ENCODE measurements at regions of chr5 and their contacts with region 1.

Region 1: GRCh38 chr5:142655339-142656267 is 30.3 kb downstream of the FGF1 start:
- DNase-seq: peak; percentile 86
- CTCF ChIP-seq: peak; percentile 96

Region 2: DNA sequence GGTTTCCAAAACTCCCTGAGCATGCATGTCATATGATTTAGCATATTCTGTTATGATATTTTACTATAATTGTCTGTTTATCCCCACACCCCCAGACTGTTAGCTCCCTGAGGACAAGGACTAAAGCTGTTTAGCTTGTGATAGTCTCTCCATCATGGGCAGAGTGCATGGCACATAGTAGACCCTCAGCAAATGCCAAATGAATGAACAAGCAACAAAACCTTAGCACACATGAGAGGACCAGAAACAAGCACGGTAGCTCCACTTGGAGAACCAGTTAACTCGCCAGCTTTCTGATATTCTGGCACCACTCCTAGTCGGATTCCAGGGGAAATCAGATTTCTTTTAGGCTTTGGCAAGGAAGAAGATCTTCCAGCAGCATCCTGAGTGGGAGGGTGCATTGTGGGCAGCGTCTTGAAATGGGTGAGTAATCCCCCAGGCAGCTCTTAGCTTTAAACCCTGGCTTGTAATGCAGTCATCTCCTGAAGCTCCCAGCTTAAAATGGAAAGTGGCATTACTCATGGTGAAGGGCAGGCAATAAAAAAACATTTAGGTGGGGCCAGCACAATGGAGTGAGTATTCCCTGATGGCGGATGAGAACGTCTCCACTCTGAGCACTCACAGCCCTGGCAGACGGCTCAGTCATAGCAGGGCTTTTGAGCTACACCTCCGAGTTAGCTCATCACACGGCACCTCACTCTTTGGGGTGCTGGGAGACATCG is 10.8 kb before region 1 on chr5:
- CTCF ChIA-PET with region 1: interaction called, 15 read pairs
- POLR2A ChIA-PET with region 1: no interaction called
- DNase-seq: no peak
- CTCF ChIP-seq: no peak

Region 3: GRCh38 chr5:142669477-142669876 is 13.9 kb after region 1 on chr5:
- CTCF ChIA-PET with region 1: interaction called, 13 read pairs
- POLR2A ChIA-PET with region 1: no interaction called
- DNase-seq: no peak
- CTCF ChIP-seq: no peak

Region 4: DNA sequence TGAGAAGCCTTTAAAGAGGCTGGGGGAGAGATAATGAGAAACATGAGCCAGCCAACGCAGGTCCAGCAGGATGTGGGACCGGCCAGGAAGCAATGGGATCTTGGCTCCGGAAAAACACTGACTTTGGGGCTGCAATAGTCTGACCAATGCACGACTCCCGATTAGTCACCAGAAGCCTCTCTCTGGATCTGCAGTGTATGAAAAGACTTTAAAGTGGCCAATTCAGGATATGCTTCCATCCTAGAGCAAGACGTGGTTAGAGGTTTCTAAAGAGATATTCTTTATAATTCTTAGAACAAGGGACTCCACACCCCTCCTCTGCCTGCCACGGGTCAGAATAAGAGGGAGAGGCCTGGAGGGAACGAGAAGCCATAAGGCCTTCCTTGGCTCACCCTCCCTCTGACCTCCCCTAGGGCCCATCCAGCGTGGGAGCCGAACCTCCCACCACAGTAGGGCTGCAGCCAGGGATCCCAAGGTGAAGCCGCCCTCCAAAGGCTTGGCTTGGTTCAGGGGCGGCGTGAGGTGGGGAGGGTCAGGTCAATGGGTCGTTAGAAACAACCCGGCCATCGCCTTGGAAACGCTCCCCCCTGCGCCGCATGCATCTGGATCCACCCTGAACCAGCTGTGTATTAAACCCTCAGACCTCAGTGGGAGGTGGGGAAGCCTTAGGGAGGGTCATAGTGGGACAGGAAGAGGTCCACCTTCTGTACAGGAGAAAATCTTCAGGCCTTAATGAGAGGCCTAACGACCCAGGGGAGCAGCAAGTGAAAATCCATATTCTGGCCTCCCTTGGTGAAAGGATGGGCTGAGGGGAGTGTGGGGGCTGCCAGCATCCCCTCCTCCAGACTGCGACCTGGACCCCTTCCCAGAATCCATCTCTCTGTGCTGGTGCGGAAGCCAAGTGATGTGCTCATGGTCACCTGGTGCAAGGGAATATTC is 19.2 kb after region 1 on chr5:
- CTCF ChIA-PET with region 1: interaction called, 13 read pairs
- POLR2A ChIA-PET with region 1: no interaction called
- DNase-seq: no peak
- CTCF ChIP-seq: no peak

Region 5: DNA sequence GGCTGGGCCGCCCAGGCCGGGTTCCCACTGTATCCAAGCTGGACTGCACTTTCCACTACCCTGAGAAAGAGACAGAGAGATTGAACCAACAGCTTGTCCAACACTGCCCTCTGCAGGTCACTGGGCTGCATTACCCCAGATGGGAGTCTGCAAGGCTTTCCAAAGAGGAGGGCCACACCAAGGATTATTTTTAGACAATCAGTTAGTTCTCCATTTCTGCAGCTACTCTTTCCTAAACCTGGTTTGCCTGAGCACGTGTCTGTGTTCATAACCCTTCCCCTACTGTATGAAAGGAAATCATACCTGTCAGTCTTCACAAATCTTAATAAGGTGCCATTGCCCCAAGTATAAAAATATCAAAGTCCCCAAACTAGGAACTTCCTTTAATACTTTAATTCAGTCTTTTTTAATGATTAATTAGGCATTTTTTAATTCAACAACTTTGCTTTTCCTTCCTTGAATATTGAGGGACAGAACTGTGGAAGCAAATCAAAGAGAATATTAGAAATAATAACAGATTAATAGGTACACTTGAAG is 43.6 kb after region 1 on chr5:
- CTCF ChIA-PET with region 1: interaction called, 23 read pairs
- POLR2A ChIA-PET with region 1: no interaction called
- DNase-seq: peak; percentile 68
- CTCF ChIP-seq: peak; percentile 94

Region 6: DNA sequence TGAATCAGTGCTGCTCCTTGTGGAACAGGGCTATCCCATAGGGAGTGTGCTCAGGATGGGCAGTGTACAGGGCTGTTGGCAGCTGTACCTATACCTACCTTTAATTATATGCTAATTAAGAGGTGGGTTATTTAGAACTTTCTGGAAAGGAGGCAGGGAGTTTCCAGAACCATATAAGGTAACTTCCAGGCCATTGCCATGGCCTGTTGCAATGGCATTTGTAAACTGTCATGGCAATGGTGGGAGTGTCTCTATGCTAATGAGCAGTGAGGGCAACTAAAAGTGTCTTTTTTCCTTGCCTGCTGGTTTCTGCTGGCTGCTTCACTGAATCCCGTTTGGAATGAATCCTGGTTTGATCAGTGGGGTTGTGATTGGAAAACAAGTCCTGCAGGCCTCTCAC is 112.3 kb after region 1 on chr5:
- CTCF ChIA-PET with region 1: no interaction called
- POLR2A ChIA-PET with region 1: no interaction called
- DNase-seq: no peak
- CTCF ChIP-seq: no peak

Region 7: GRCh38 chr5:142881076-142881783 is 225.6 kb after region 1 on chr5:
- CTCF ChIA-PET with region 1: interaction called, 17 read pairs
- POLR2A ChIA-PET with region 1: no interaction called
- DNase-seq: peak; percentile 40
- CTCF ChIP-seq: no peak

Region 8: GRCh38 chr5:142888469-142889085 is 233.0 kb after region 1 on chr5:
- CTCF ChIA-PET with region 1: interaction called, 15 read pairs
- POLR2A ChIA-PET with region 1: no interaction called
- DNase-seq: peak; percentile 44
- CTCF ChIP-seq: peak; percentile 63